ENCODE measurements at regions of chr17 and their contacts with region 1.

Region 1: GRCh38 chr17:42132941-42133340 is 10.3 kb downstream of the HSPB9 start:
- DNase-seq: peak; percentile 48
- H3K4me3 ChIP-seq: peak overlapping the region in 1 of 3 experiments; percentile 44
- H3K27ac ChIP-seq: peak overlapping the region; percentile 71
- H3K4me1 ChIP-seq: peaks cover 79% of the 10 kb centered on the region
- H3K27me3 ChIP-seq: no peaks in the 10 kb centered on the region
- CTCF ChIP-seq: no peak
- POLR2A ChIP-seq: no peak

Region 2: GRCh38 chr17:42120770-42121769 is 11.9 kb before region 1 on chr17 and contains the start of gene KAT2A:
- CTCF ChIA-PET with region 1: interaction called, 5 read pairs
- POLR2A ChIA-PET with region 1: interaction called, 11 read pairs
- dilution Hi-C with region 1: no loop called
- intact Hi-C with region 1: no loop called
- DNase-seq: peak; percentile 79
- H3K4me3 ChIP-seq: peak within 1 kb of the TSS in 2 of 3 experiments; percentile 62 to 70
- H3K27ac ChIP-seq: no peak within 1 kb of the TSS
- H3K4me1 ChIP-seq: peaks cover 5% of the 10 kb centered on the region
- H3K27me3 ChIP-seq: no peaks in the 10 kb centered on the region
- CTCF ChIP-seq: no peak
- POLR2A ChIP-seq: peak; percentile 84
- total RNA-seq, gene KAT2A: 31.3 and 33.4 TPM in 2 replicates

Region 3: DNA sequence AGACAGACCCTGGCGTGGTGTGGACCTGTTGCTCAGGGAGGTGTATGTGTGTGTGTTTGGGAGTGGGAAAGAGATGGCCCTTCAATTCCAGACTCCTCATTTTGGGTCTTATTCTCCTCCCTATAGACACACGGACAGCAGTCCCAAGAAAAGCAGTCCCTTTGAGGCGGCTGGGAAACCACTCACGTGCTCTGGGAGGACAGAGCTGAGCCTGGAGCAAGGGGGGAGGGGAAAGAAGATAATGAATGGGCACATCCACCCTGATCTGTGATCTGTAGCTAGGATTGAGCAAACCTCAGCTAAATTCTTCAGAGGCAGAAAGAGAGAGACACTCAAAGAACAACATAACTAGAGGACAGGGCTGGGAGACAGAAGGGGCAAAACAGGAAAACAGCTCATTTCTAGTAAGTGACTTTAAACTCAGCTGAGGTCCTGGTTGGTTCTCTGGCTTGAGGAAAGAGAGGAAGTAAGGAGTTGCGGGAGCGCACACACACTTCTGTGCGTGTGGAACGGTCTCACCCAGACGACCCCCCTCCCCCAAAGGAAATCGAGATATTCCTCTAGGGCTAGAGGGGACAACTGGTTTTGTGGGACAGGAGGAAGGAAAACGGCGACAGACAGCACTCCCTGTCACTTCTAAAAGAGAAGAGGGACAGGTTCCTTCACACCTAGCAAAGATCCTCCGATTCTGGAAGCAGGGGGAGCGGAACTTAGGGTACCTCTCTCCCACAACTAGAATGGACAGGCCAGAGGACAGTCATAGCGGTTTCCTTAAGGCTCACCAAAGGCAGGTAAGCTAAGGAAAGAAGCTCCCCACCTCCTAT is 21.2 kb after region 1 on chr17:
- CTCF ChIA-PET with region 1: interaction called, 13 read pairs
- POLR2A ChIA-PET with region 1: interaction called, 4 read pairs
- dilution Hi-C with region 1: no loop called
- intact Hi-C with region 1: loop called (anchors 1 kb)
- DNase-seq: peak; percentile 73
- H3K4me3 ChIP-seq: peak overlapping the region; percentile 73 to 100 (median 90)
- H3K27ac ChIP-seq: peak overlapping the region; percentile 75
- H3K4me1 ChIP-seq: peaks cover 13% of the 10 kb centered on the region
- H3K27me3 ChIP-seq: no peaks in the 10 kb centered on the region
- CTCF ChIP-seq: no peak
- POLR2A ChIP-seq: peak; percentile 53

Region 4: GRCh38 chr17:42183741-42184711 is 51.1 kb after region 1 on chr17:
- CTCF ChIA-PET with region 1: interaction called, 12 read pairs
- POLR2A ChIA-PET with region 1: no interaction called
- dilution Hi-C with region 1: no loop called
- intact Hi-C with region 1: loop called (anchors 1 kb)
- DNase-seq: peak; percentile 70
- H3K4me3 ChIP-seq: peak overlapping the region; percentile 35 to 51 (median 45)
- H3K27ac ChIP-seq: peak overlapping the region; percentile 16
- H3K4me1 ChIP-seq: peaks cover 14% of the 10 kb centered on the region
- H3K27me3 ChIP-seq: peaks cover 9 to 13% of the 10 kb centered on the region in 2 experiments
- CTCF ChIP-seq: peak; percentile 86 to 99
- POLR2A ChIP-seq: peak; percentile 38

Region 5: GRCh38 chr17:42230225-42230624 is 97.3 kb after region 1 on chr17:
- CTCF ChIA-PET with region 1: no interaction called
- POLR2A ChIA-PET with region 1: no interaction called
- dilution Hi-C with region 1: no loop called
- intact Hi-C with region 1: no loop called
- DNase-seq: no peak
- H3K4me3 ChIP-seq: no peak overlapping the region
- H3K27ac ChIP-seq: no peak overlapping the region
- H3K4me1 ChIP-seq: peaks cover 17% of the 10 kb centered on the region
- H3K27me3 ChIP-seq: no peaks in the 10 kb centered on the region
- CTCF ChIP-seq: no peak
- POLR2A ChIP-seq: no peak

Region 6: GRCh38 chr17:42276359-42276608 is 143.3 kb after region 1 on chr17 and contains the start of gene STAT5B:
- CTCF ChIA-PET with region 1: interaction called, 3 read pairs
- POLR2A ChIA-PET with region 1: no interaction called
- dilution Hi-C with region 1: no loop called
- intact Hi-C with region 1: loop called (anchors 10 kb)
- DNase-seq: peak; percentile 46
- H3K4me3 ChIP-seq: peak within 1 kb of the TSS; percentile 65 to 96 (median 79)
- H3K27ac ChIP-seq: peak within 1 kb of the TSS; percentile 59
- H3K4me1 ChIP-seq: peaks cover 16% of the 10 kb centered on the region
- H3K27me3 ChIP-seq: no peaks in the 10 kb centered on the region
- CTCF ChIP-seq: no peak
- POLR2A ChIP-seq: no peak
- total RNA-seq, gene STAT5B: 53.1 and 53.7 TPM in 2 replicates

Measured in endothelial cell of umbilical vein (primary cell).